Ascending aorta (tissue), 2 donors: ENCODE measurements at regions of chr6 and their contacts with region 1.

Region 1: GRCh38 chr6:108541838-108542759 is 18.6 kb upstream of the FOXO3 start:
- DNase-seq: peak in 1 of 2 donors; percentile 75
- H3K4me3 ChIP-seq: no peak overlapping the region
- H3K27ac ChIP-seq: no peak overlapping the region
- H3K4me1 ChIP-seq: no peaks in the 10 kb centered on the region
- H3K27me3 ChIP-seq: no peaks in the 10 kb centered on the region
- CTCF ChIP-seq: peak; percentile 79 to 83 (median 82)

Region 2: DNA sequence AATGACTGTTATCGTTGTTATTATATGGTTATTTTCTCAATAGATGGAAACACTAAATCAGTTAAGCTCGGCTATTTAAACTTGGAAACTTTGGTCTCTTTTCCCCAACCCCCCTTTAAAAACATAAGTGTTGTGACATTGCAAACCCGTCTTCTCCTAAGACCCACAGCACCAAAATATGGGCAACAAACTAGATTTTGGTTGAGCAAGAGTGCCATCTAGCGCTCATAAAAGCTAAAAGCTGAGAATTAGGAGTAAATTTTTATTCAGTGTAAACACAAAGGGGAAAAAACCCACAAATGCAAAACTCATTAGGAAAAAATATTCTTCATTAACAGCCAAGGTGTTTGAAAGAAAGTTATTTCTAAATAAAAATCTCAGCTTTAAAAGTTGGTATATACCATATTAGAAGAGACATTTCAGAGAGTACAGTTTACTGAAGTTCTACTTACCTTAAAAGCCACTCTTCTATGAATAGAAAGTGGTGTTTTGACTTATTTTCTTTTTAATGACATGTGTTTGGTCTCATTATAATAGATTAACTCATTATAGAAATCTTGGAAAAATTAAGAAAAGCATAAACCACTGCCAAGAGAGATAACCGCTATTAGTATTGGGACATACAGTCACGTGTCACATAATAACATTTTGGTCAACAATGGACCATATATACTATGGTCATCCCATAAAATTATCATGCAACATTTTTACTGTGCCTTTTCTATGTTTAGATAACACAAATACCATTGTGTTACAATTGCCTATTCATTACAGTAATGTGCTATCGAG is 531.4 kb after region 1 on chr6:
- intact Hi-C with region 1: loop called (anchors 1 kb)
- DNase-seq: no peak
- H3K4me3 ChIP-seq: no peak overlapping the region
- H3K27ac ChIP-seq: no peak overlapping the region
- H3K4me1 ChIP-seq: peaks cover 0 to 3% of the 10 kb centered on the region in 2 donors
- H3K27me3 ChIP-seq: no peaks in the 10 kb centered on the region
- CTCF ChIP-seq: peak; percentile 45 to 68 (median 63)